Upper lobe of right lung (tissue), 1 donor: ENCODE measurements at regions of chr5 and their contacts with region 1.

Region 1: DNA sequence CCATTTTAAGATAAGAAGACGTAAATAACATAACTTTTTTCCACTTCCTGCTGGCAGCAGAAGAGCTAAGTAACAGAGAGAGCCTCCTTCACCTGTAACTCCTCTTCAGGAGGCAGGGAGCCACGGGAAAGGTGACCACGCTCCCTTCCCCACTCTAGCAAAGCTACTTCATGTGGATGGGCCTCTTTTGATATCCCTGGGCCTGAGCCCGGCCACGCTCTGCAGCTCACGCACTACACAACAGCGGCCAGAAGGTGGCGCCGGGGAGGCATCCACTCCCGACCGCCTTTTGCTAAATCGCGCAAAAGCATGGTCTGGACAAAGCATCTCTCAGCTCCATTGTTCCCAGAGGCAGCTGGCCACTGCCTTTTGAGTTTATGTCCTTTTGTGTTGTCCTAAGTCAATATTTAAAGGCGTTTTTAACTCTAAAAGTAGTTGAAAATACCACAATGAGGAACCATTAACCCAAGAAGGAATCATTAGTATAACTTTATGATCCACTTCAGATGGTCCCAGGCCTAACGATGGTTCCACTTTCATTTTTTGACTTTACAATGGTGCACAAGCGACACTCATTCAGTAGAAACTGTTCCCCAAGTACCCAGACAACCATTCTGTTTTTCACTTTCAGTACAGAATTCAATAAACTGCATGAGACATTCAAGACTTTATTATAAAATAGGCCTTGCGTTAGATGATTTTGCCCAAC is 23.6 kb downstream of the CMBL start:
- DNase-seq: peak; percentile 91
- ATAC-seq: peak; percentile 98
- H3K4me3 ChIP-seq: no peak overlapping the region
- H3K27ac ChIP-seq: no peak overlapping the region
- H3K4me1 ChIP-seq: peaks cover 5% of the 10 kb centered on the region
- H3K27me3 ChIP-seq: no peaks in the 10 kb centered on the region
- CTCF ChIP-seq: peak; percentile 96

Region 2: GRCh38 chr5:10424124-10424731 is 140.1 kb after region 1 on chr5:
- intact Hi-C with region 1: loop called (anchors 10 kb)
- DNase-seq: no peak
- ATAC-seq: peak; percentile 52
- H3K4me3 ChIP-seq: no peak overlapping the region
- H3K27ac ChIP-seq: no peak overlapping the region
- H3K4me1 ChIP-seq: peaks cover 14% of the 10 kb centered on the region
- H3K27me3 ChIP-seq: no peaks in the 10 kb centered on the region
- CTCF ChIP-seq: peak; percentile 49